Cardiac septum (tissue), 1 donor: ENCODE measurements at regions of chr21 and their contacts with region 1.

Region 1: DNA sequence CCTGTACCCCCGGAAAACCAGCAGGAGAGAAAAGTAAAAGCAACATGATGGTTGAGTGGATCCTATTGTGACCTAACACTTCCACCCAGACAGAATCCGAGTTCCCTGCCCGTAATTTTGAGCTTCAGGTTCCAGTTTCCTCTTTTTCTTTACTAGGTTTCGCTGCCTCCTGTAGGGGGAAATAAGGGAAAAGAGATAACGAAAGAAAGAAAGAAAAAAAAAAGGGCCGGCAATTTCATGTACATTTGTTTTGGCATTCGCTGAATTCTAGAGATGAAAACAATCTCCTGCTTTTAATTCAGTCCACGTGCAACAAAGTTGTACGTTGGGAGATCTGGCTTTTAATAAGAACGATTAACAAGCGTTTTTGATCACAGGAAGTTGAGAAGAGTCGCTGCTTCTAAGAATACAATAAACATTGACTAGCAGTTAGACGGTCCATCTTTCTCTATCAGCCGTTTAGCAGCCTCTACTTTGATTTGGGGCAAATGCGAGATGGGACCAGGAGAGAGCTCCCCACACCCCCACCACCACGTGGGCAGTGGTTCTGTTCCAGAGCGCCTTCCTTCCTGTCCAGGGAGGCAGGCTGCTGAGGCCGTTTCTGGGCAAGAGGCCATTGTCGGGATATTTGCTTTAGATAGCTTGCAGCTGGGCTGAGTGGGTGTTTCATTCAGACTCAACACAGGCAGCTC is 155.9 kb upstream of the RUNX1 start:
- DNase-seq: peak; percentile 88

Region 2: DNA sequence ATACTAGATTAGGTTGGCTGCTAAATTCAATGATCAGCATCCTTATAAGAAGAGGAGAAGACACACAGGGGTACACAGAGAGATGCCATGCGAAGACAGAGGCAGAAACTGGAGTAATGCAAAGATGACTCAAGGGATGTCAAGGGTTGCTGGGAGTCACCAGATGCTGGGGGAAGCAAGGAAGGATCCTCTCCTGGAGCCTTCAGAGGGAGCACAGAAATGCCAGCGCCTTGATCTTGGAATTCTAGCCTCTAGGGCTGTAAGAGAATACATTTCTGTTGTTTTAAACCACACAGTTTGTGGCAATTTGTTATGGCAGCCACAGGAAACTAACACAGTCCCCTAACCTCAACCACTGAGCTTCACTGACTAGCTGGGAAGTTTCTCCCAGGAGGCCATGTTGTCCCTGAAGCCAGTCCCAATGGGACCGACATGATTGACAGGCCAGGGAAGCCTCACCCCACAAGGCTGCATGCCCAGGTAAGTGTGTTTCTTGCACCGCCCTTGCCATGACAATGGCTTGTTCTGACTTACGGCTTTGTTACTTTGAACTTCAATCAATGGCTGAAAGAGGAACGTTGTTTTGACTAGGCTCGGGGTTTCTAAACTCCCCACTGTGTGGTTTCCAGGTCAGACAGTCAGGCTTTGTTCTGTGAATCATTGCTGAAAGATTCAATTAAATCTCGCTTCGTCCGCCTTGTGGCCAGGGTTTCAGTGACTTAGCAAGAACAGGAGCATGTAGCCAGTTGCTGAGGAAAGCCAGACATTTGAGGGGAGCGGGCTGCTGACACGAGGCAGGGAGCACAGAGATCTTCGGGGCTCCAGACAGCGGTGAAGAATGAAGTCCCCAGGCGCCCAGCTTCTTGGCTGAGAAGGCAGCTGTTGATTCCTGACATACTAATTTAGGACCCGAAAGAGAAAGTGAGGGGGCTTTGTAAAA is 218.2 kb before region 1 on chr21:
- intact Hi-C with region 1: loop called (anchors 10 kb)
- DNase-seq: no peak

Region 3: GRCh38 chr21:35011681-35012080 is 193.3 kb before region 1 on chr21:
- intact Hi-C with region 1: no loop called
- DNase-seq: no peak

Region 4: DNA sequence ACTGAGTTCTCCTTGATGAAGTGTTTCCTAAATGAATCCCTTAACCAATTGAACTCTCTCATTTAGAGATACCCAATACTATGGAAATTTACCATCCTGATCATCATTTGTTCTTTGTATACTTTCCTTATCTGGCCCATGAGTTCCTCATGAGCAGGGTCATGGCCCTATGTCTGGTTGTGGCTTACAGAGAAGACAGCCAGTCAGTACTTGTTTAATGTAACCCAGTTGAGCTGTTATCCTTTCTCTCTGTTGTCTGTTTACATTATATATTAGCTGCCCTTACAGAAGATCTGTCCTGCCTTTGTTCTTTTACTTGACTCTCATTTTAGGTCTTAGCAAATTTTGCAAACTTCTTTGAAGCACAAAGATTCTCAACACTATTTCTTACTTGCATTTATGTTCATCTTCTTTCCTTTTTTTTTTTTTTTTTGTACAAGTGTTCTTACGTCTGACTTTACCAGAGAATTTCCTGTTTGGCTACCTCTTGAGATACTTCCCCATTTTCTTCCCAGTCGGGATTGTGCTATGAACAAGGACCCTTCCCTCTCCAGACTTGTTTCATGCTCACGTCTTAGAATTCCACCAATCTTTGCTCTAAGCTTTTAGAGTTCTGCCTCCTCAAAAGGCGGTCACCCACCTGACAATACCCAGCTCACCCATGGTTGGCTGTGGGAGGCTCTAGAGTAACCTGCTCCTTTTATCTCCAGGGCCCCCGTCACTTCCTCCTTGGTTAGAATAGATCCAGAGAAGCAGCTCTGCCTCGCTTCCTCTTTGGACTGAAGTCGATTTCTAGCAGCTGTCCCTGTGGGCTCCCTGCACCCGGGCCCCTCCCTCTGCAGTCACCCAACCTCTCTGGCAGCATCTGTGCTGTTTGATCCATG is 102.3 kb before region 1 on chr21:
- intact Hi-C with region 1: loop called (anchors 10 kb)
- DNase-seq: peak; percentile 81

Region 5: DNA sequence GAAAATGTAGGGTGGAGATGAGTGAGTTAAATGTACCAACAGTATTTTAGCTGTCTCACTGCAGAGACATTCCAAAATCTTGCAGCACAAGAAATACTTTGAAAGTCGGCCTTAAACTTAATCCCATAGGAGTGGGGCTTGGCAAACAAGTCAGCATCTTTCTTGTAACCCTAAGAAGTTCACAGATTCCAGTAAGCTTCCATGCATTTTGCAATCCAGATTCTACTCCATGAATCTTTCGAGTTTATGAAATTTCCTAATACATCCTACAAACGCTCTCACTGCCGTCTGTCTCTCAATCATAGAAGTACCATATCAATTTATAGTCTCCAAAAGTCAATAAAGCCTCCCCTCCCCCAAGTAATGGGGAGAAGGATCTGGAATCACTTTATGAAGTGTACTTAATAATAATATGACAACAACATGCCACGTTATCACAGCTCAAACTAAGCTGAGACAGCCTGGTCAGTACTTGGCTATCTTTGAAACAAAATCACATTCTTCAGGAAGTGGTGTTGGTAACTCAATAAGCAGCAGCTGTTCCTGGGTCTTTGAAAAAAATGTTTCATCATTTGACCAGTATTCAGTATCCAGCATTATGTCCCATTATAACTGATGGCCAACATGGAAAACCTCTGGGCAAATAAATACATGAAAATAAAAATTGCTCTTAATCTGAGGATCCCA is 161.5 kb after region 1 on chr21:
- intact Hi-C with region 1: loop called (anchors 5 kb)
- DNase-seq: no peak

Region 6: DNA sequence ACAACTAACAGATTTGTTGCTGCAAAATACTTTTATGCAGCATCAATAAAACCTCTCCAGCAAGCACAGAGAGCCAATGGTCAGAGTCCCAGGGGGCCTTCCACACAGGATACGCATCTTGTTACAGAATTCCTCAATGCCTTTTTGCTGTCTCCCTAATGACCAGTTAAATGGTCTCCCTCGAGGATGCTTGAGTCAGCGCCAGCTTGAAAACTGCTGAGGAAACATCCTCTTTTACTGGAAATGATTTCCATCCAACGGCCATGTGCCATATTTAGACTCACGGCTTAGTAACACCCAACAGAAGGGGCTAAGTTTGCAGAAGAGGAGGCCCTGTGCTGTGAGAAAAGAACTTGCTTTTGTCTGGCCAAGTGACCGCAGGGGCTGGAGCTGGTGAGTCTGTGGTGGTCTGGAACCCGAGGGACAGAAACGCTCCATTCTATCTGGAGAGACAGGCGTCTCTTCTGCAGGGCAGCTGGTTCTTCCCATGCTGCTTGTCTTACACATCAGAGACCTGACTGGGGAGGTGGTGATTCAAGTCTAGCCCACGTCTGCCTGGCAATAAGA is 359.0 kb after region 1 on chr21:
- intact Hi-C with region 1: loop called (anchors 10 kb)
- DNase-seq: peak; percentile 76